ENCODE measurements at regions of chr10 and their contacts with region 1.

Region 1: DNA sequence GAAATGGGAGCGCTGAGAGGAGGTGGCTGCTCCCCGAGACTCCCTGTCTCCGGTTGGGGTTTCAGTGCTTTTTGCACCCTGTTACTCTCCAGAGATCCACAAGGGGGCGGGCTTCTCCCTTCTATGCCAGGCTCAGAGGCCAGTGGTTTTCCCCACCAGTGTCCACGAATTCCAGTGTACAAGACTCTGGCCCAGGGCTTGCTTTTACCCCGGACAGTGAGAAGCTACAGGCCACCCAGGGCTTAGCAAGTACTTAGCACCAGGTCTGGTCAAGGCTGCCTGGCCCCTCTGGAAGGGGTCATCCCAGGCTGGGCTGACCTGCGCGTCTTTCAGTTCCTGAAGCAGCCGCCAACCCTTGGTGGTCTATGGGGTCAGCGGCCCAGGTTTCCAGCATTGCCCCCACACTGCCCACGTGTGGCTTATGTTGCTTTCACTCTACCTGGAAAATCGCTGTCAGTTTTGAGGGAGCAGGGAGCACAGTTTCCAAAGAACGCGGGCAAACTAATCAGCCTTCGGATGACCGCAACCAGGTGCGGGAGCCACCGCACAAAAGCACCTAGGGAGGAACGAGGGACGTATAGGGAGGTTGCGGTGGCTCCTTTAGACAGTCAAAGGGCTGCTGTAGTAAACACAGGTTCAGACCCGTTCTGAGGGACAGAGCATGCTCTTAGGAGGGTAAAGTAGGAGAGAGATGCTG is 6.8 kb downstream of the CYP26A1 start:
- DNase-seq: no peak
- H3K4me3 ChIP-seq: no peak overlapping the region; the same call in 1 of the 2 replicates
- CTCF ChIP-seq: peak; percentile 85

Region 2: DNA sequence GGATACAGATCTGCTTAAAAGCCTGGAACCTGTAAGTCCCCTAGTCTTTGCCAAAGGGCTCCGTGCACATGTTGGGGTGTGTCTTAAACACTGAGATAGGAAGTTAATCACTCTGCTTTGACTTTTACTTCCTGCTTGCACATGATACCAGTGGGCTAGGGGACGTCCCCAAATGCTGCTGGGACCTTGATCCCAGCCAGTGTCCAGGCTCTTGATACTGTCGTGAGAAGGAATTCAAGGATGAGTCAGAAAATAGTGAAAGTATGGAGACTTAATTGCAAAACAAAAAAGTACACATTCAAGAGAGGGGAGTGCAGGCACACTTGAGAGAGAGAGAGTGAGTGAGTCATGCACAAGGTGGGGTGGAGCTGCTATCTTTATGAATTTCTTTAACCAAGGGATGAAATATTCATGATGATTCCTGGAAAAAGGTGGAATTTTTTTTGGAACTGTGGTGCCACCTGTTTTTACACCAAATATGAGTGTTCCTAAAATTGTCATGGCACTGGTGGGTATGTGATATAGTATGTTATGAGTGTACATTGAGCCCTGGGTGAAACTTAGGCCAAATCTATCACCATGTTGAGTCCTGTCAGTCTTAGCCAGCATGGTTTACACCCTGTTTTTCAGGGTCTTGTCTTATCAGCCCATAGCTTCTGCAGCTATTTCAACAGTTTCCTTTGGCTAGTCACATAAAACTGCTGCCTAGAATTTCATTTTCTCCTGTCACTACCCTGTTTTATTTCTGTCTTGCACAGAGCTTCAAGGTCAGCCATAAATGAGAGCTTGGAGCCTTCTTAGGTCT is 108.2 kb before region 1 on chr10:
- CTCF ChIA-PET with region 1: no interaction called
- POLR2A ChIA-PET with region 1: no interaction called
- DNase-seq: peak; percentile 71
- H3K4me3 ChIP-seq: no peak overlapping the region
- CTCF ChIP-seq: no peak

Region 3: GRCh38 chr10:93006435-93007039 is 74.0 kb before region 1 on chr10:
- CTCF ChIA-PET with region 1: interaction called, 11 read pairs
- POLR2A ChIA-PET with region 1: no interaction called
- DNase-seq: no peak
- H3K4me3 ChIP-seq: no peak overlapping the region
- CTCF ChIP-seq: peak; percentile 56

Region 4: GRCh38 chr10:93068411-93069244 is 11.9 kb before region 1 on chr10:
- CTCF ChIA-PET with region 1: interaction called, 31 read pairs
- POLR2A ChIA-PET with region 1: interaction called, 3 read pairs
- DNase-seq: no peak
- H3K4me3 ChIP-seq: peak overlapping the region; percentile 18; the same call in 1 of the 2 replicates
- CTCF ChIP-seq: no peak

Region 5: DNA sequence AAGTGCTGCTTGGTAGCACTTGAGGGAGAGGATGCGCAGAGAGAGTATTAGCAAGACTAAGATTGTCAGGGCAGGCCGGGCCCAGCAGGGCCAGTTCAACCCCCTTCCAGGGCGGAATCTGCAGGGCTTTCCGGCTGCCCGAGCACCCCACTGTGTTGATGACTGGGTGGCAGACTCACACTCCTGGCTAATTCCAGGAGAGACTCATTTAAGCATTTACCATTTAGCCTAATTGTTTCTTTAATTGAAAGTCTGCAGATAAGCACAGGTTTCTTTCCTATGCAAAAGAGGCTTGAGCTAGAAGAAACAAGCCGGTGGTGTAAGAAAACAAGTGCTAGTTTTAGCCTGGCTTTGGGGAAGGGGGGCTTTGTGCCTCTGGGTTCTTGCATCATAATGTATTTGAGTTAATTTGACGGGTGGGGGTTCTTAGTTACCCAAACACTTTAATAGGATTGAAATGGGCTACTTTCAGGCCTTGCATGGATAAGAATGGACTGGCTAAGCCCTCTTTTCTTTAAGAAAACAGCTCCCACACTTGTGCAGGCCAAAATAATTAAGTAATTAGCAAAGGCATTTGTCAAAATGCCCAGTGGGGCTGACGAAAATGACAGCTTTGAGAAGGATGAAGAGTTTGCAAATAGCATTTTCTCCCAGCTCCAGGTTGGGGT is 200.3 kb after region 1 on chr10:
- CTCF ChIA-PET with region 1: interaction called, 14 read pairs
- POLR2A ChIA-PET with region 1: no interaction called
- DNase-seq: no peak
- H3K4me3 ChIP-seq: no peak overlapping the region
- CTCF ChIP-seq: no peak

Region 6: GRCh38 chr10:93299606-93300287 is 219.2 kb after region 1 on chr10:
- CTCF ChIA-PET with region 1: interaction called, 25 read pairs
- POLR2A ChIA-PET with region 1: no interaction called
- DNase-seq: peak; percentile 37
- H3K4me3 ChIP-seq: peak overlapping the region; percentile 23
- CTCF ChIP-seq: no peak

Region 7: DNA sequence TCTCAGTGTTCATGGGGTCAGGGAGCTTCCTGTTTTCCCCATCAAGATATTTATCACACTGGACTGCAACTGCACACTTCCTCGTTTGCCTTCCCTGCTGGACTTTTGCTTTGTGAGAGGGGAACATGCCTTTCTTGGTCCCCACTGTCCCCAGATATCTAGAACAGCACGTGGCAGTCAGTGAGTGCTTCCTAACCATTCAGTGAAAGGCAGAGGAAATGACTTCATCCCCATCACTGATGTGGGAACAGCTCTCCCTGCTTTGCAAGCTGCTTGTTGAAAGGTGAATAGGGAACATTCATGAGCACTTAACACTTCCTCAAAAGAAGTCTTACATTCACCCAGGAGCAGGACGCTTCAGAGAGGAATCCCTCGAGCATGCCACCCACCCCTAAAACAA is 266.2 kb after region 1 on chr10:
- CTCF ChIA-PET with region 1: interaction called, 27 read pairs
- POLR2A ChIA-PET with region 1: no interaction called
- DNase-seq: no peak
- H3K4me3 ChIP-seq: no peak overlapping the region
- CTCF ChIP-seq: no peak

Region 8: DNA sequence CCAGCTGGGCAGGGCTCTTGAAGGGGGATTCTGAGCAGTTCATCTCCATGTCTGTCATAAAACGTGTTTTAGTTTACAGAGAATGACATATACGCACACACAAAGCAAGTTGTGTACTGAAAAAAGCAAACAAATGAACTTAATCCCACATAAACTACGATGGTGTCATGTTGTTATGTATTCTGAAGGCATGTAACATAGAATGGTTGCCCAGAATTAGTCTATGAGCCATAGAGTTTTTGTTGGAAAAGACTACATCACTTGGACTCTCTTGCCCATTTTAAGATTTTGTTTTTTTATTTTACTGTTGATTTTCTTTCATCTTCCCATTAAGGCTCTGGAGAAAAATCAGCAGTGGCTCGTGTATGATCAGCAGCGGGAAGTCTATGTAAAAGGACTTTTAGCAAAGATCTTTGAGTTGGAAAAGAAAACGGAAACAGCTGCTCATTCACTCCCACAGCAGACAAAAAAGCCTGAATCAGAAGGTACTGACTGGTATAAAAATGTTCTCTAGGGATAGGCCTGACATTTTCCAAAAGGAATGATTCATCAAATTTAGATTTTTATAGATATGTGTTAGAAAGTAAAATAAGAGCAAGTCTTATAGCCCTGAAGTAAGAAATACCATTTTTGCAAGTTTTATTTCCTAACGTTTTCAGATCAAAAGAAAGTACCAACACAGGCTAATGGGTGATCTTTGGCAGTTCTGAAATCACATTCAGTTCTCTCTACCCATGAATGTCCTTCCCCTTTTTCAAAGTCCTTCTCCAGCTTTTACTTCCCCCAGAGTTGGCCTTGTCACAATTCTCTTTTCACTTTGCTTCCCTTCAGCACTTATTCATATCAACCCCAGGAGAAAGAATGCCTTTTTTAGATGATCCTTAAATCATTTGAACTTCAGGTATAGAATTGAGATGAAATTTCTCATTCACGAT is 434.8 kb after region 1 on chr10:
- CTCF ChIA-PET with region 1: interaction called, 92 read pairs
- POLR2A ChIA-PET with region 1: no interaction called
- DNase-seq: no peak
- H3K4me3 ChIP-seq: no peak overlapping the region
- CTCF ChIP-seq: no peak

Region 9: GRCh38 chr10:94066411-94066810 is 985.9 kb after region 1 on chr10:
- CTCF ChIA-PET with region 1: no interaction called
- POLR2A ChIA-PET with region 1: no interaction called
- DNase-seq: no peak
- H3K4me3 ChIP-seq: no peak overlapping the region
- CTCF ChIP-seq: no peak